ENCODE measurements at regions of chr4 and their contacts with region 1.

Region 1: DNA sequence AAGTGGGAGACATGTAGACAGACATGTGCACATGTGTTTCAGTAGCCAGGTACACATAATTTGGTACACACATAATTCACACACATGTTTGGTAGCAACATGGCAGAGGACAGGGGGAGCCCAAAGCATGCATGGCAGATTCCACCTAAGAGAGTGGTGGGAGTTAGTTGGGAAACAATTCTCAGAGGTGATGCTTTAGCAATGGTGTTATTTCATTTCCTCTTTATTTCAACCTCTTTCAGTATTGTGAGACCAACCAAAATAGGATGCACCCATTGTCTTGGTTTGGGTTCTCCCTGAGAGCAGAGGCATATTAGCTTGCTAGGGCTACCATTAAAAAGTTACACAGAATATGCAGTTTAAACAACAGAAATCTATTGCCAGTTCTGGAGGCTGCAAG is 92.2 kb upstream of the ANXA3 start:
- DNase-seq: no peak
- H3K4me3 ChIP-seq: no peak overlapping the region
- H3K4me3 Mint-ChIP-seq: no peak overlapping the region
- H3K27ac ChIP-seq: no peak overlapping the region
- H3K27ac Mint-ChIP-seq: no peak overlapping the region
- H3K4me1 ChIP-seq: no peaks in the 10 kb centered on the region
- H3K4me1 Mint-ChIP-seq: no peaks in the 10 kb centered on the region
- H3K27me3 ChIP-seq: no peaks in the 10 kb centered on the region
- H3K27me3 Mint-ChIP-seq: peaks cover 3 to 8% of the 10 kb centered on the region in 2 donors

Region 2: GRCh38 chr4:78441756-78442155 is 17.6 kb before region 1 on chr4:
- CTCF ChIA-PET with region 1: no interaction called
- POLR2A ChIA-PET with region 1: no interaction called
- intact Hi-C with region 1: loop called (anchors 1 kb)
- DNase-seq: no peak
- H3K4me3 ChIP-seq: no peak overlapping the region
- H3K4me3 Mint-ChIP-seq: no peak overlapping the region
- H3K27ac ChIP-seq: no peak overlapping the region
- H3K27ac Mint-ChIP-seq: no peak overlapping the region
- H3K4me1 ChIP-seq: no peaks in the 10 kb centered on the region
- H3K4me1 Mint-ChIP-seq: no peaks in the 10 kb centered on the region
- H3K27me3 ChIP-seq: no peaks in the 10 kb centered on the region
- H3K27me3 Mint-ChIP-seq: peaks cover 1 to 2% of the 10 kb centered on the region in 2 donors

Measured in CD4-positive, alpha-beta memory T cell (primary cell).